Tibial artery (tissue), 4 donors: ENCODE measurements at regions of chr18 and their contacts with region 1.

Region 1: DNA sequence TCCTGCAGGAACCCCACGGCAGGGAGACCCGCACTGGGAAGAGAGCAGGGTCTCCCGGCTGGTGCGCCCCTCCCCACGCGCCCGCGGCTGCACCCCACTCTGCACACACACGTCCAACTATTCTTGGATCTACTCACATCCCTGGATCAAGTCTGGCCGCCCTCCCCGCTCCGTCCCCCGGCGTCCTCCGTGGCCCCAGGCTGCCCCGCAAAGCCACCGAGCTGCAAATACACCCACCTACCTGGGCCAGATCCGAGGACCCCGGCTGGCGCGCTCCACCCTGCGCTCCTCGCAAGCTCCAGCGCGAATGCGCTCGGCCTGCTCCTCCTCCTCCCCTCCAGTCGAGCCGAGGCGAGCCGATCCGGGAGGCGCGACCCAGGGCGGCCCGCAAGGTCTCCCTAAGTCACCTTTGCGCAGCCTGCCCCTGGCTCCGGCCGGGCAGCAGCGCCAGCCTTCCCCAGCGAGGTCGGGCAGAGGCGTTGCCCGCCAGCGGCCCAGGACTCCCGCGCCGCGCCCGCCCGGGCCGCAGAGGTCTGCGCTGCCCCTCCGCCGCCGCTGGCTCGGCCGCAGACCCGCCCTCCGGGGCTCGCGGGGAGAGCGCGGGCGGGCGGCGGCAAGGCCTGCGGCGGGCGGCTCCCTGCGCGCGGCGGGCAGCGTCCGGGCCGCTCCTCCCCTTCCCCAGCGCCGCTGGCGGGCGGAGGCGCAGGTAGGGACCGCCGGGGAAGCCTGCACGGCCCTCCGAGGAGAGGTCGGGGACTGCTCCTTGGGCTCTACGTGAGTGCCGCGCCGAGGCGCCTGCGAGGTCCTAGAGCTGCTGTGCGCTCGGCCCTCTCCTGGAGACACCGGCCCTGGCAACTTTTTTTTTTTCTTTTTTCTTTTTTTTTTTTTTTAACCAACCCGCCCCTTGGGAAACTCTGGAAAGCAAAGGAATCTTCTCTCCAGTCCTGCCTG is 126.0 kb downstream of the OSBPL1A start:
- DNase-seq: peak; percentile 67 to 88
- H3K4me3 ChIP-seq: peak overlapping the region; percentile 87 to 90
- H3K27ac ChIP-seq: peak overlapping the region; percentile 85 to 88
- H3K4me1 ChIP-seq: peaks cover 0 to 40% (median 20%) of the 10 kb centered on the region in 4 donors
- H3K27me3 ChIP-seq: no peaks in the 10 kb centered on the region
- CTCF ChIP-seq: peak; percentile 10

Region 2: DNA sequence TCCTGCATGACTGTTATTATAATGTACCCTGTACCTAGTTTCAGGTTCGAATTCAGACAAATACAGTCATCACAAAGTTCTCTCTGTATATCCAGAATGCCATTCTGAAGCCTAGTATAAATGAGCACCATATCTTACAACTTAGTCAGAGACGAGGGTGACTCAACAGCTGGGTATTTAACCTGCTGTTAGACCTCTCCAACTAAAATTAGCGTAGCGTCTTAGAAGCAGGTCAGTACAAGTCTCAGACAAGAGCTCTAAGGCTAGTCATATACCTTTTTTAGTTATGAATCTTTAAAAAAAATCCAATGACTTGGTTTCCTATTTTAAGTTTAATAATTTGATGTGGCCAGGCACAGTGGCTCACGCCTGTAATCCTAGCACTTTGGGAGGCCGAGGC is 58.7 kb before region 1 on chr18:
- intact Hi-C with region 1: loop called (anchors 5 kb)
- DNase-seq: no peak
- H3K4me3 ChIP-seq: no peak overlapping the region
- H3K27ac ChIP-seq: peak overlapping the region; percentile 53 to 73
- H3K4me1 ChIP-seq: peaks cover 0 to 59% (median 24%) of the 10 kb centered on the region in 4 donors
- H3K27me3 ChIP-seq: no peaks in the 10 kb centered on the region
- CTCF ChIP-seq: no peak